Posterior cingulate gyrus (tissue), 11 donors: ENCODE measurements at regions of chr12 and their contacts with region 1.

Region 1: DNA sequence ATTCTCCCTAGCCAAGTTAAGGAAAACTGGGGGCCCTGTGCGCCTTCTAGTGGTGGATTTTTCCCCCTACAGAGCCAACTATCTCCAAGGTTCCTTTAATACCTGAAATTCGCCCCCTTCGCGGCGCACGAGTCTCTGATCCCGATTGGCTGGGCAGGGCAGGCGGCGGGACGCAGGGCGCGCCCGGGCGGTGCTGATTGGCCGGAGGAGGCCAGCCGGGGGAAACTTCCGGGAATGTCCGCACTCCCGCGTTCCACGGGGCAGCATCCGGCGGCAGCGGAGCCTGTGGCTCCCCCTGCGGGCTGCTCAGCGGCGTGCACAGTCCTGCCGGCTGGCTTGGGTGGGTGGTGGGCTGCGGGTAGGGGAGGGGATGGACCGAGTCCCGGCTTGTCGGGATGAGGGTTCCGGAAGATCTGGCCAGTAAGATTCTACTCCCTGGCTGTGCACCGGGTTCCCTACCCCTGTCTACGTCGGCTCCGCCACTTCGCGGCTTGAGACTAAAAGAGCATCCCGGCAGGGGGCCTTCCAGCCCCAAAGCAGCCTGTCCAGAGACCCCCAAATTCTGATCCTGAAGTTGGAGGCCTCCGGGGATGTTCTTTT is at the start of gene NABP2:
- DNase-seq: peak; percentile 95 to 100 (median 98)

Region 2: DNA sequence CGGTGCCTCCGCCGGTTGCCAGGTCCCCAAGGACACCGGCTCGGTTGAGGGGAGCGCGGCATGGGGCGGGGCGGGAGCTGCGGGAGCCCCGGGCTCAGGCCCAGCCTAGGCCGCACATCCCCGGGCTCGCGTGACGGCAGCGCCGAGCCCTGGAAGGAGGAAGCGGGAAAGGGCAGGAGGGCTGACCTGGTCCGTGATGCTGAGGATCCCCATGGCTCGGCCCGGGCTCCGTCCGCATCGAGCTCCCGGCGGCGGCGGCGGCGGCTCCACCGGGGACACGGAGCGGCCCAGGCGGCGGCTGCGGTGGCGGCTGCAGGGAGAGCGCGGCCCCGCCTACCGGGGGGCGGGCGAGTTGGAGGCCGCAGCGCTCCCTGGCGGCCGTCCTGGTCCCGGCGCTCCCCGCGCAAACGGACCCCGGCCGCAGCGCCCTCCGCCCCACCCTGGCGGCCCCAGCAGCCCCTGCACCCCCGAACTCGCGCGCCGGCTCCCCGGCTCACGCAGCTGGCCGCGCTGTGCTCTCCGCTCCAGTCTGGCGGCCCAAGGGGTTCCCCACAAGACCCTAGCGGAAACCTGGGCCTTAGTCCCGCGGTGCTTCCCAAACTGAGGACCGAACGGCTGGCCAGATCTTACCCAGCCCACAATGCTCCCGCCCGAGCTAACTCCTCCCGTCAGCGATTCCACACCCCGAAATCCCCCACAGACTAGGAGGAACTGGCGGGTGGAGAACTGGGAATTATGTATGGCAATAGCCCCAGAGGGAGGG is 34.0 kb after region 1 on chr12 and contains the start of gene ANKRD52:
- intact Hi-C with region 1: loop called (anchors 5 kb)
- DNase-seq: peak; percentile 53 to 96 (median 70)